Cardiac septum (tissue), 1 donor: ENCODE measurements at regions of chr7 and their contacts with region 1.

Region 1: GRCh38 chr7:103597606-103598005 is 151.6 kb upstream of the SLC26A5 start:
- DNase-seq: no peak

Region 2: GRCh38 chr7:103009466-103010185 is 588.0 kb before region 1 on chr7:
- intact Hi-C with region 1: no loop called
- DNase-seq: no peak

Region 3: DNA sequence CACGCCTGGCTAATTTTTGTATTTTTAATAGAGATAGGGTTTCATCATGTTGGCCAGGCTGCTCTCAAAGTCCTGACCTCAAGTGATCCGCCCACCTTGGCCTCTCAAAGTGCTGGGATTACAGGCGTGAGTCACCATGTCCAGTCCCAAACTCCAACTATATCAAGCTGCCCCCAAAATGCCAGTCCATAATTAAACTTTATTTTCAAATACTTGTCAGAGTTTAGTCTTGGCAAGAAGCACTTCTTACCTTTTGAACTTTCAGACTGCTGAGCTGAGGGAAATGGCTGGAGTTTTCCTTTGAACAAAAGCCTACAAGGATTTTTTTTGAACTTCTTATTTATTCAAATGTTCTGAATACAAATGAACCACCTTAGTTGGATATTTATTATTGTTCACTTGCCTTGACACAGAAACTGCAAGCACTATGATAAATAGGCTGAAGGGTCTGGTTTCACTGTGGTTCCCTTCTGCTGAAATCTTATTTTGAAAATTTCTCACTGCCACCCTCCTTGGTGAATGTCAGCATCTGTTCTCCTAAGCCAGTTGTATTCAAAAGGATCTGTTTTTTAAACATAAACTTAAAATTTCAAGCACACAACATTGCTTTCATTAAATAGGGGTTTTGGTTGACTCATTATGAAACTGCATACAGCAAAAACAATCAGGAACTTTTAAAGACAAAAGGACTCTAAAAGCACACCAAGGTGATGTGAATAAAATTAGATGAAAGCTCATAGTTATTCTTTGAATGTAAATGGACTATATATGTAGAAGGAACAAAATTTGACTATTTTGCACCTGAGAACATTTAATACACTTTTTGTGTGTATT is 49.9 kb before region 1 on chr7:
- intact Hi-C with region 1: loop called (anchors 2 kb)
- DNase-seq: no peak

Region 4: DNA sequence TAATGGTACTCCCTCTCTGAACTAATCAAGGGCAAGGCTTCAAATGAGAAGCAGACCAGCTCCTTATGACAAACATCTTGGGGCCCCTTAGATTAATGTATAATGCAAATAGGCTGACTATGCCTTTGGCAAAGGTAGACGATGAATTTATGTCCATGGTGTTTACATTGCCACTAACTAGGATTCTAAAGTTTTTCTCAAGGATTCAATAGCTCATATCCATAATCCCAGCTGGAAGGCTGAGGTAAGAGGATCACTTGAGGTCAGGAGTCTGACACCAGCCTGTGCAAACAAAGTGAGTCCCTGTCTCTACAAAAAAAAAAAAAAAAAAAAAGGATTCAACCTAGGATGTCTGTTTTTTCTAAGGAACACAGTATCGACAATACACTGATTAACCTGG is 513.7 kb after region 1 on chr7:
- intact Hi-C with region 1: no loop called
- DNase-seq: no peak